ENCODE measurements at regions of chr20 and their contacts with region 1.

Region 1: GRCh38 chr20:37901654-37902503 is 1.0 kb upstream of the VSTM2L start:
- DNase-seq: peak; percentile 86
- H3K4me3 ChIP-seq: peak overlapping the region; percentile 57 to 60
- H3K27ac ChIP-seq: no peak overlapping the region
- H3K4me1 ChIP-seq: peaks cover 12 to 25% of the 10 kb centered on the region in 2 experiments; a peak in 2 of 4 replicates
- H3K27me3 ChIP-seq: no peaks in the 10 kb centered on the region
- CTCF ChIP-seq: peak; percentile 63
- EP300 ChIP-seq: no peak
- RAD21 ChIP-seq: peak; percentile 83

Region 2: DNA sequence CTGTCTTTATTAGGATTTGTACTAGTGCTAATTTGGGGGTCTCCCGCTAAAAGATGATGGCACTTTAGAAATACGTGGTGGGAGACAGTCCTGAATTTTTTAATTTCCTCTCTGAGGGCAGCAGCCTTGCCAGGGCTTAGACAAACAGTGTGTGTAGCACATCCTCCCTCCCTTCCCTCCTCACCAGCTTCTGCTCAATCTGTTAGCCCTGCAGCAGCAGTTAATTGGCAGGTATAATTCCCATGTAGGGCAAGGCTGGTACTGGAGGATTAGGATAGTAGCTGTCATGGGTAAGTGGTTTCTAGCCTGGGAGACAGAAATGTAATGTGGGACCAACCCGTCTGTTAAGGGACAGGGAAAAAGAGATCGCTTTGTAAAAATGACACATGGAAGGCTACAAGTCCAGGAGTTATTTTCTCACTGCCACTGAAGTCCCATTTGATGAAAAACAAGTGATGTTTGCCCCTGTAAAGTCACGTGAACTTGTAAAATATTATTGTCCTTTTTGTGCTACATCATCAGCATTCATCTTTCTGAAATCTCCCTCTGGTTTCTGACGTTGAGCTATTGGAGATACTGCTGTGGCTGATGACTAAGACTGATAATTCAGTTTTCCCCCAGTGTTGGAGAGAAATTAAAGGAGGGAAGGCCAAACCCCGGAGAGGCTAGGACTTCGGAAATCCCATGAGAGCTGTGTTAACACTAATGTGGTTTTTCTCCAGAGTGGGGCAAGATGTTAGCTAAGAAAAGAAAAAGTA is 167.5 kb before region 1 on chr20:
- CTCF ChIA-PET with region 1: no interaction called
- POLR2A ChIA-PET with region 1: no interaction called
- DNase-seq: peak; percentile 53
- H3K4me3 ChIP-seq: no peak overlapping the region
- H3K27ac ChIP-seq: peak overlapping the region; percentile 23 to 30; a peak in 3 of 4 replicates
- H3K4me1 ChIP-seq: peaks cover 6 to 13% of the 10 kb centered on the region in 2 experiments; a peak in 3 of 4 replicates
- H3K27me3 ChIP-seq: no peaks in the 10 kb centered on the region
- CTCF ChIP-seq: no peak
- EP300 ChIP-seq: no peak
- RAD21 ChIP-seq: no peak

Region 3: DNA sequence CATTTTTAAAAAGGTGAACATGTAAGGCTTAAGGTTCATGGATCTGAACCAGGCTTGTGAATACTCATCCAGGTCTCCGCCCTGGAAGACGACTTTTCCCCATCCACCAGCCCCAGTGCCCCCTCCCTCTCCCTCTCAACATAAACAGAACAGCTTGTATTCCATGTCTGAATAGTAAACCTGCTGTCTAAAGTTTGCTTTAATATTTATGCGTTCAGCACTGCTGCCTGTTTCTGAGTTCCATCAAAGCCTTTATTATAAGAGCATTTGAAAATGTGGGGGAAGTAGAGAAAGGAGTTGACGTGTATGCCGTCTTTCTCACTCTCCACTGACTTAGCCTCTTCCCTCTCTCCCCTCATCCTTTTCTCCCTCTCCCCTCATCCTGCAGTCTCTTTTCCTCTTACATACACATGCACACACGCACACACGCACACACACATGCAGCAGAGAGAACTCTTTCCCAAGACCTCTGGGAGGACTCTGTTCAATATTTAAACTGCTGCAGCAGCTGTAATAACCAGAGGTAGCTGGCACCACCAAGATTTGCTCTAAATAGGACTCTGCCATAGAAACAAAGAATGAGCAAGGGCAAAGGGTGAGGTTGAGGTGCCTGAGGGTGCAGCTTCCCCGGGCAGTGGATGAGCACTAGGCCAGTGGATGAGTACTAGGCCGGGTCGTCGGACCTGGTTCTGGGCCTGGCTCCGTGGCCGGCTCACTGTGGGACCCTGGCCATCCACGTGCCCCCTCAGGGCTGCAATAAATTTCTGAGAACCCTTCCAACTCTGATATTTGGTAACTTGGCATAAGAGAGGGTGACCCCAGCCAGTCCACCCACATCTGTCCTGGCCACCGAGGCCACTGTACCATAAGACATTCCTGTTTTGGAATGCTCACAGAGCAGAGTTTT is 34.3 kb before region 1 on chr20:
- CTCF ChIA-PET with region 1: no interaction called
- POLR2A ChIA-PET with region 1: no interaction called
- DNase-seq: no peak
- H3K4me3 ChIP-seq: no peak overlapping the region
- H3K27ac ChIP-seq: no peak overlapping the region
- H3K4me1 ChIP-seq: peaks cover 0 to 12% of the 10 kb centered on the region in 2 experiments; a peak in 2 of 4 replicates
- H3K27me3 ChIP-seq: no peaks in the 10 kb centered on the region
- CTCF ChIP-seq: no peak
- EP300 ChIP-seq: no peak
- RAD21 ChIP-seq: no peak

Region 4: DNA sequence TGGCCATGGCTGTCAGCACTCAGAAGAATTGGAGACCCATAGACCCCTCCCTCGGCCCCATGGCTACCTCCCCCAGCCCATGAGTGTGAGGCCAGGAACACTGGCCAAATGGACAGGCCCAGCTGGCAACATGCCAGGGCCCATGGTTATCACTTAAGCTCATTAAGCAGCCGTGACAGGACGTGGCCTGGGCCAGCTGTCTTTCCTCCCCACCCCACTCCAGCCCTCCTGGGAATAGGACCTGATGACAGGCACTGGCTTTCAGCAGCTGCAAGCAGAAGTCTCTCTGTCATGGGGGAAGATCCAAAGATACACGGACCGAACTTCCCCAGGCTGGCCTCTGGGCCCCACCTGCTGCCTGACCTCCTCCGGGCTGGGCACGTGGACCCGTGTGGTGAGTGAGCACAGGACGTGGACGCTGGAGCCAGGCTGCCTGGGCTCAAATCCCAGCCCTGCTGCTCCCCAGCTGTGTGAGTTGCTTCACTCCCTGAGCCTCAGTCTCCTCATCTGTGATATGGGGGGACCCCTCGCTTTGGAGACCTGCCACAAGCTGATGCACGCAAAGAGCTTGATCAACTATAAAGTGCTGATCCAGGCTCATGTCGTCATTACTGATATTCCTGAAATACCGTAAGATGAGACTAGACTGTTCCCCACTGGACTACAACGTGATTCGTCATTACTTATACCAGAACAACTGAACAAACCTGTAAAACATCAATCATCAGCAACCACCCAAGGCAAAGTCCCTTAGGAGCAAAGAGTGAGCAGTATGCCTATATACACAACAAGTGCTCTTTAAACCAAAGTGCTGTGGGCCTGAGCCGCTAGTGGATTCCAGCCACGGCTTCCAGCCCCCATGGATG is 20.9 kb before region 1 on chr20:
- CTCF ChIA-PET with region 1: interaction called, 11 read pairs
- POLR2A ChIA-PET with region 1: interaction called, 3 read pairs
- DNase-seq: peak; percentile 96
- H3K4me3 ChIP-seq: no peak overlapping the region
- H3K27ac ChIP-seq: peak overlapping the region in 1 of 2 experiments; percentile 77; a peak in 2 of 4 replicates
- H3K4me1 ChIP-seq: peaks cover 0 to 42% of the 10 kb centered on the region in 2 experiments; a peak in 2 of 4 replicates
- H3K27me3 ChIP-seq: no peaks in the 10 kb centered on the region
- CTCF ChIP-seq: no peak
- EP300 ChIP-seq: peak in 1 of 2 experiments; percentile 95; a peak in 2 of 4 replicates
- RAD21 ChIP-seq: peak; percentile 37

Region 5: DNA sequence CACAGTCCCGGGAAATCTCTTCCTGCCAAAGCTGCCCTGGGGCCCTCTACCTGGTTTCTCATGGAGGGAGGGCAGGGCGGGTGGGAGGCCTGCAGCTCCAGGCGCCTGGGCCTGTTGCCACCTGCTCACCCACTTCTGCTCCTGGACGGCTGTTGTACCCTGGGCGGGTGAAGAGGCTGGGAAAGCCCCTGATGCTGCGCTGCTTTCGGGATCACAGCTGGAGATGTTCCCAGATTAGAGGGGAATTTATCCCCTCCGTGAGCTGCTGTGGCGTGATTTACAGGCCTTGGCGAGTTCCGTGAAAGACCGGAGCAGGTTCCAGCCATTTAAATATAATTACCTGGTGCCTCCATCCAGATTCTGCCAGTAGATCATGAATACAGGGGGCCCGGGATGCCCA is 11.2 kb before region 1 on chr20:
- CTCF ChIA-PET with region 1: interaction called, 33 read pairs
- POLR2A ChIA-PET with region 1: no interaction called
- DNase-seq: no peak
- H3K4me3 ChIP-seq: no peak overlapping the region
- H3K27ac ChIP-seq: no peak overlapping the region
- H3K4me1 ChIP-seq: no peaks in the 10 kb centered on the region; a peak in 1 of 4 replicates
- H3K27me3 ChIP-seq: no peaks in the 10 kb centered on the region
- CTCF ChIP-seq: no peak
- EP300 ChIP-seq: no peak
- RAD21 ChIP-seq: no peak

Region 6: DNA sequence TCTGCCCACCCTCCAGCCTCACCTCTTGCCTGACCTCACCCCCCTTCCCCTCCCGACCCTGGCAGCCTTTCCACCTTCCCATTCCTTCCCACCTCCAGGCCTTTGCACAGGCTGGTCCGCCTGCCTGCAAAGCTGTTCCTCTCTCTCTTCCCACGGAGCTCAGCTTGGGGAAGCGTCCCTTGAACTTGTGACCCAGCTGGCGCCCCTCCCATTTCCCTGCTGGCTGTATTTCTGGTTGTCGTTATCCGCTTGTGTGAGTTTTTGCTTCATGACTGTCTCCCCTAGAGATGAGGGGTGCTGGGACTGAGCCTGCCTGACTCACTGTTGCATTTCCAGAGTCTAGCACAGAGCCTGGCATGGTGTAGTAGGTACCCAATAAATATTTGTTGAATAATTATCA is 33.6 kb after region 1 on chr20:
- CTCF ChIA-PET with region 1: interaction called, 10 read pairs
- POLR2A ChIA-PET with region 1: no interaction called
- DNase-seq: no peak
- H3K4me3 ChIP-seq: no peak overlapping the region
- H3K27ac ChIP-seq: no peak overlapping the region
- H3K4me1 ChIP-seq: peaks cover 0 to 9% of the 10 kb centered on the region in 2 experiments; a peak in 1 of 4 replicates
- H3K27me3 ChIP-seq: no peaks in the 10 kb centered on the region
- CTCF ChIP-seq: no peak
- EP300 ChIP-seq: no peak
- RAD21 ChIP-seq: no peak

Region 7: GRCh38 chr20:37958856-37959520 is 57.1 kb after region 1 on chr20:
- CTCF ChIA-PET with region 1: no interaction called
- POLR2A ChIA-PET with region 1: no interaction called
- DNase-seq: no peak
- H3K4me3 ChIP-seq: no peak overlapping the region
- H3K27ac ChIP-seq: no peak overlapping the region
- H3K4me1 ChIP-seq: peaks cover 0 to 4% of the 10 kb centered on the region in 2 experiments; a peak in 3 of 4 replicates
- H3K27me3 ChIP-seq: no peaks in the 10 kb centered on the region
- CTCF ChIP-seq: no peak
- EP300 ChIP-seq: no peak
- RAD21 ChIP-seq: no peak

Region 8: GRCh38 chr20:37990571-37991151 is 88.8 kb after region 1 on chr20:
- CTCF ChIA-PET with region 1: interaction called, 50 read pairs
- POLR2A ChIA-PET with region 1: no interaction called
- DNase-seq: peak; percentile 67
- H3K4me3 ChIP-seq: no peak overlapping the region
- H3K27ac ChIP-seq: peak overlapping the region in 1 of 2 experiments; percentile 91; a peak in 2 of 4 replicates
- H3K4me1 ChIP-seq: peaks cover 4 to 72% of the 10 kb centered on the region in 2 experiments; a peak in 3 of 4 replicates
- H3K27me3 ChIP-seq: no peaks in the 10 kb centered on the region
- CTCF ChIP-seq: no peak
- EP300 ChIP-seq: peak in 1 of 2 experiments; percentile 92; a peak in 2 of 4 replicates
- RAD21 ChIP-seq: no peak

Region 9: GRCh38 chr20:38143646-38144554 is 242.0 kb after region 1 on chr20:
- CTCF ChIA-PET with region 1: no interaction called
- POLR2A ChIA-PET with region 1: no interaction called
- DNase-seq: peak; percentile 46
- H3K4me3 ChIP-seq: no peak overlapping the region
- H3K27ac ChIP-seq: peak overlapping the region; percentile 66 to 98
- H3K4me1 ChIP-seq: peaks cover 18 to 43% of the 10 kb centered on the region in 2 experiments
- H3K27me3 ChIP-seq: no peaks in the 10 kb centered on the region
- CTCF ChIP-seq: no peak
- EP300 ChIP-seq: peak in 1 of 2 experiments; percentile 83; a peak in 2 of 4 replicates
- RAD21 ChIP-seq: no peak